Activated CD8-positive, alpha-beta T cell treated with anti-CD3 and anti-CD28 coated beads for 36 hours (primary cell): ENCODE measurements at regions of chr18 and their contacts with region 1.

Region 1: DNA sequence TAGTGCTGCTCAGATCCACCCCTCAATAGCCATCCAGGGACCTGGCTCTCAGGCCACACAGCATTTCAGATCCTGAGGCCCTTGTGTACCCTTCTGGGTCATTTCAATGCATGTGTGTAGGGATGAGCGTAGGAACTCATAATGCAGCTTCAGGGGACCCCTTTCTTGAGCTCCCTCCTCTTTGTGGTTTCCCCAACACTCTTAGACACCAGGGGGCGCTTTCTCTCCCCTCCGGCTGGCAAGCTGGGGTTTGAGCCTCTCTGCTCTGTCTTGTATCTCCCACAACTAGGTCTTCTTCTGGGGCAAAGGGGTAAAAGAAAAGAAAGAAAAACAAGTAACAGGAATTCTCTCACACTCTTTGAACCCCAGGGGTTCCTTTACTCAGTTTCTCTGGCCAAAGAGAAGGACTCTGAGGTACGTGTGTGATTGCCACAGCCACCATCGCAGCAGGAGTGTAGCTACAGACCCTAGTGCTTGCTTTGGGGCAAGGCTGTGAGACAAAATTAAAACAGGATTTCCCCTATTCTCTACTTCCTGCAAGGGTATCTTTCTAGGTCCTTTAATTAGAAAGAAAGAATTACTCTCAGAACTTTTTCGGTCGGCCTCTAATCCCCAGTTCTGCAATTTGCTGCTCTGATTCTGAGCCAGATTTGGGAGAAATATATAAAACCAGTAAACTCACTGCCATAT is 38.0 kb downstream of the CABYR start:
- DNase-seq: peak; percentile 73
- ATAC-seq: peak; percentile 47
- H3K4me3 Mint-ChIP-seq: no peak overlapping the region
- H3K27ac Mint-ChIP-seq: no peak overlapping the region
- H3K4me1 Mint-ChIP-seq: no peaks in the 10 kb centered on the region
- H3K27me3 Mint-ChIP-seq: no peaks in the 10 kb centered on the region
- CTCF ChIP-seq: peak; percentile 70

Region 2: DNA sequence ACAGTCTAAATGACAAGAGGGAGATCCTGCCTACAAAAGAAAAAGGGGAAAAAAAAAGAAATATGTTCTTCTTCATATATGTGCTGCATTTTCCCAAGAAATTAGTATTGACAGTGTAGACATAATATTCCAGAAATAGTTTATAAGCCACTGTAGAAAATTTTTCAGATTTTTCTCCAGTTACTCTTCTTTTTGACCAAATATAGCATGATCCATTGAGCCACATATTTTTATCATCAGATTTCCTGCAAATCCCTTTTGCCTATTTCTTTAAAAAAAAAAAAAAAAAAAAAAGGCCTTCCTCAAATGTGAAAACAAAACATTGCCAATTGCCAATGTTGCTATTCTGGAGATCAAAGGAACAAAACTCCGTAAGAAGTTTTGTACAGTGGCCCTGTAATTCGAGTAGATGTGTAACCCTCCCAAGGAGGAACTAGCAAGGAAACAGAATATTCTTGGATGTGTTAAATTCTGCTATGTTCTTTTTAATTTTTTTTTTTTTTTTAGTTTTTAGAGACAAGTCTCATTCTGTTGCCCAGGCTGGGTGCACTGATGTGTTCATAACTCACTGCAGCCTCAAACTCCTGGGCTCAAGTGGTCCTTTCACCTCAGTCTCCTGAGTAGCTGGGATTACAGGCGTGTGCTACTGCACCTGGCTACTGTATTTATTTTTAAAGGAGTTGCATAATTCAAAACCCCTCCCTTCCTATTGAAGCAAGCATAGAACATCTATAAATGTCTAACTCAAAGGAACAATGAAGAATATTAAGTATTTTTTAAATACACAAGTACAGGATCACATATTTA is 50.5 kb before region 1 on chr18:
- CTCF ChIA-PET with region 1: no interaction called
- POLR2A ChIA-PET with region 1: no interaction called
- intact Hi-C with region 1: no loop called
- DNase-seq: no peak
- ATAC-seq: no peak
- H3K4me3 Mint-ChIP-seq: no peak overlapping the region
- H3K27ac Mint-ChIP-seq: no peak overlapping the region
- H3K4me1 Mint-ChIP-seq: no peaks in the 10 kb centered on the region
- H3K27me3 Mint-ChIP-seq: no peaks in the 10 kb centered on the region
- CTCF ChIP-seq: no peak

Region 3: GRCh38 chr18:24189007-24189528 is 12.2 kb after region 1 on chr18:
- CTCF ChIA-PET with region 1: interaction called, 19 read pairs
- POLR2A ChIA-PET with region 1: no interaction called
- intact Hi-C with region 1: no loop called
- DNase-seq: no peak
- ATAC-seq: no peak
- H3K4me3 Mint-ChIP-seq: no peak overlapping the region
- H3K27ac Mint-ChIP-seq: no peak overlapping the region
- H3K4me1 Mint-ChIP-seq: no peaks in the 10 kb centered on the region
- H3K27me3 Mint-ChIP-seq: peaks cover 6% of the 10 kb centered on the region
- CTCF ChIP-seq: no peak

Region 4: DNA sequence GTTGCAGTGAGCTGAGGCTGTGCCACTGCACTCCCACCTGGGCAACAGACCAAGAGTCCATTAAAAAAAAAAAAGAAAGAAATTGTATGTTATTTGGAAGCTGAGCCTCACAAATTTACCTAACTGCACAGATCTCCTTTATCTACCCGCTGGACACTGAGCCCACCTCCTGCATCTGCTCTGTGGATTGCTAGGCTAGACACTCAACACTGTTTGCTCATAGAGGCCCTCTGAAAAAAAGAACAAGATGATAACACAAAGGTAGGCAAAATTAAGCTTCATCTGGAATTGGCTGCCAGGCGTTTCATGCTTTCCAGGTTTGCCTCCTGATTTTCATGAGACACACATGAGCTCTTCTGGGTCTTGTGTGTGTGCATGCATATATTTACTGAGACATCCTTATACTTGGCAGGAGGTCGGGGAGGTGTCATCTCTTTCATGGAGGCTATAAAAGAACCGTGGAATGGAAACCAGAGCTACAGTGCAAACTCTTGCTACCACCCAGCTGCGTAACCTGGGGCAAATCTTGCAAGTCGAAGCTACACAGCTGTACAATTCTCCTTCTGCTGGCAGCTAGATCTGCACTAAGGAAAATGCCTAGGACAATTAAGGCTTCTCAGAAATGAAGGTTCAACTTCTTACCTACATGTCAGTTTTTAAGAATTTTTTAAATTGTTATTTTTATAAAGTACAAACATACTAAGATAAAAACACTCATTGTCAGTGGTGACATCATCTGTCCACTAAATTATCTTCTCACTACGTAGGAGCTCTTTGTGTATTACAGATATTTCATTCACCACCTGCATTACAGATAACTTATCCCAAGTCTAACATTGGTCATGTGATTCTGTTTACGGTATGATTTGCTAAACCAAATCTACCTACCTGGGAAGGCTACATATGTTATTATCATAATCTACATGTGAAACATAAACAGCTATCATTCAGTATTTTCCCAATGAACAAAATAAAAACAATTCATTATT is 25.1 kb after region 1 on chr18:
- CTCF ChIA-PET with region 1: interaction called, 10 read pairs
- POLR2A ChIA-PET with region 1: no interaction called
- intact Hi-C with region 1: no loop called
- DNase-seq: no peak
- ATAC-seq: no peak
- H3K4me3 Mint-ChIP-seq: no peak overlapping the region
- H3K27ac Mint-ChIP-seq: no peak overlapping the region
- H3K4me1 Mint-ChIP-seq: no peaks in the 10 kb centered on the region
- H3K27me3 Mint-ChIP-seq: peaks cover 2% of the 10 kb centered on the region
- CTCF ChIP-seq: no peak